ENCODE measurements at regions of chr18 and their contacts with region 1.

Region 1: GRCh38 chr18:46173393-46174341 is 69.5 kb downstream of the HAUS1 start:
- DNase-seq: peak; percentile 96
- ATAC-seq: peak; percentile 90
- H3K4me3 Mint-ChIP-seq: peak overlapping the region; percentile 97
- H3K27ac Mint-ChIP-seq: peak overlapping the region; percentile 99
- H3K4me1 Mint-ChIP-seq: peaks cover 37% of the 10 kb centered on the region
- H3K27me3 Mint-ChIP-seq: no peaks in the 10 kb centered on the region

Region 2: GRCh38 chr18:44458777-44459176 is 1714.9 kb before region 1 on chr18:
- CTCF ChIA-PET with region 1: no interaction called
- POLR2A ChIA-PET with region 1: no interaction called
- intact Hi-C with region 1: no loop called
- DNase-seq: no peak
- ATAC-seq: peak; percentile 81
- H3K4me3 Mint-ChIP-seq: no peak overlapping the region
- H3K27ac Mint-ChIP-seq: no peak overlapping the region
- H3K4me1 Mint-ChIP-seq: no peaks in the 10 kb centered on the region
- H3K27me3 Mint-ChIP-seq: no peaks in the 10 kb centered on the region

Region 3: DNA sequence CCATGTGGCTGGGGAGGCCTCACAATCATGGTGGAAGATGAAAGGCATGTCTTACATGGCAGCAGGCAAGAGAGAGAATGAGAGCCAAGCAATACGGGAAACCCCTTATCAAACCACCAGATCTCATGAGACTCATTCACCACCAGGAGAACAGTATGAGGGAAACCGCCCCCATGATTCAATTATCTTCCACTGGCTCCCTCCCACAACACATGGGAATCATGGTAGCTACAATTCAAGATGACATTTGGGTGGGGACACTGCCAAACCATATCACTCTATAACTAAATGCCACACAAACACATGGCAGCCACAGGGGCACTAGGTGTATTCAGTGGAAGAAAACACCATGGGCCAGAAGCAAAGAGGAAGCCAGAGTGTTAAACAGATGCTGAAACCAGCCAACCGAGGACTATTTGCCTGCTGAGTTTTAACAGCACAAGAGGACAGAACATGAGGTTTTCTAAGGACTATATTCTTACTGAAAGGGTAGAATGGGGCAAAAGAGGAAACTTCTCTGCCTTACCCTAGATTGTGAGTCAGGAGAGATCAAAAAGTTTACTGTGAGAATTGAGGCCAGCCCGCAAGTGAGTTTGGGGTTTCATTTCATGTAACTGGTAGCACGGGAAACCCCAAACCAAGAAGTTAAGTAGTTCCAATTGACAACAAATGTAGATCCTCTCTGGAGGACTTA is 299.0 kb before region 1 on chr18:
- CTCF ChIA-PET with region 1: no interaction called
- POLR2A ChIA-PET with region 1: no interaction called
- intact Hi-C with region 1: no loop called
- DNase-seq: peak; percentile 84
- ATAC-seq: peak; percentile 91
- H3K4me3 Mint-ChIP-seq: peak overlapping the region; percentile 41
- H3K27ac Mint-ChIP-seq: peak overlapping the region; percentile 96
- H3K4me1 Mint-ChIP-seq: peaks cover 34% of the 10 kb centered on the region
- H3K27me3 Mint-ChIP-seq: no peaks in the 10 kb centered on the region

Region 4: DNA sequence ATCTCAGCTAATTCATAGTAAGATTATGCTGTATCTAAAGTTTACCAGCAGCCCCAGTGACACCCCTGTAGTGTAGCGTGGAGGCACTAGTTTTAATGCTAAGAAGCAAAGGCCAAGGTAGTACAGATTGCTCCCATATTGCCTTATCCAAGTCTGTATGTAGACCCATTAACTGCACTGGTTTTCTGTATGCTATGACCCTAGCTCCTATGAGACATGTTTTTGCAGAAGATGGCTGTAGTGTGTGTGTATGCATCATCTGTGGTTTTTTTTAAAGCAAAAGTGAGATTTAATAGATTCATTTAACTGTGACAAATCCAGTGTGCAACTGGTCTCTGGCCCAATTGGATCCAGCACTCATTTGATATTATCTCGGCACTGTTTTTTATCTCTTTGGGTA is 17.0 kb after region 1 on chr18:
- CTCF ChIA-PET with region 1: interaction called, 19 read pairs
- POLR2A ChIA-PET with region 1: interaction called, 9 read pairs
- intact Hi-C with region 1: no loop called
- DNase-seq: no peak
- ATAC-seq: peak; percentile 61
- H3K4me3 Mint-ChIP-seq: no peak overlapping the region
- H3K27ac Mint-ChIP-seq: no peak overlapping the region
- H3K4me1 Mint-ChIP-seq: peaks cover 27% of the 10 kb centered on the region
- H3K27me3 Mint-ChIP-seq: no peaks in the 10 kb centered on the region

Region 5: GRCh38 chr18:46220116-46220515 is 46.4 kb after region 1 on chr18:
- CTCF ChIA-PET with region 1: interaction called, 26 read pairs
- POLR2A ChIA-PET with region 1: interaction called, 3 read pairs
- intact Hi-C with region 1: no loop called
- DNase-seq: no peak
- ATAC-seq: no peak
- H3K4me3 Mint-ChIP-seq: no peak overlapping the region
- H3K27ac Mint-ChIP-seq: no peak overlapping the region
- H3K4me1 Mint-ChIP-seq: peaks cover 79% of the 10 kb centered on the region
- H3K27me3 Mint-ChIP-seq: no peaks in the 10 kb centered on the region

Region 6: GRCh38 chr18:46281185-46282176 is 107.8 kb after region 1 on chr18:
- CTCF ChIA-PET with region 1: interaction called, 14 read pairs
- POLR2A ChIA-PET with region 1: no interaction called
- intact Hi-C with region 1: no loop called
- DNase-seq: peak; percentile 80
- ATAC-seq: peak; percentile 87
- H3K4me3 Mint-ChIP-seq: no peak overlapping the region
- H3K27ac Mint-ChIP-seq: no peak overlapping the region
- H3K4me1 Mint-ChIP-seq: peaks cover 11% of the 10 kb centered on the region
- H3K27me3 Mint-ChIP-seq: no peaks in the 10 kb centered on the region

Region 7: DNA sequence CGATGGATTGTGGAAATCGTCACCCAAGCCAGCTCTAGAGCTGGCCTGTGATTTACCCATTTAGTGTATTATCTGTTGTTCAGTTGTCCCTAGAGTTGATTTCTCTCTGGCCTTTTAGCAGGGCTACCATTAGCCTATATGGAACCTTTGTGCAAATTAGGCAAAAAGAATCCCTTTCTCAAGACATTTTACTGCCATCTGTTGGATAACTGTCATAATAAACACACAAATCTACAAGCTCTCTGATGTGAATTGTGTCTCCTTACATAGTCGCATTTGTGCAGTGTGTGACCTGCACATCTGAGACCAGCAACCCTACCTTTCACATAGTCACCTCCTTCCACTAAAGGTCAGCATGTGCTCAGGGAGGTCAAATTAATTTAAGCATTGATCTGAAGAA is 449.3 kb after region 1 on chr18:
- CTCF ChIA-PET with region 1: no interaction called
- POLR2A ChIA-PET with region 1: no interaction called
- intact Hi-C with region 1: loop called in 1 of 2 experiments (anchors 2 kb)
- DNase-seq: no peak
- ATAC-seq: peak; percentile 44
- H3K4me3 Mint-ChIP-seq: no peak overlapping the region
- H3K27ac Mint-ChIP-seq: peak overlapping the region; percentile 67
- H3K4me1 Mint-ChIP-seq: peaks cover 31% of the 10 kb centered on the region
- H3K27me3 Mint-ChIP-seq: no peaks in the 10 kb centered on the region

Region 8: GRCh38 chr18:47150029-47150823 is 976.6 kb after region 1 on chr18 and contains the start of gene HDHD2:
- CTCF ChIA-PET with region 1: no interaction called
- POLR2A ChIA-PET with region 1: no interaction called
- intact Hi-C with region 1: loop called in 1 of 2 experiments (anchors 5 kb)
- DNase-seq: peak; percentile 88
- ATAC-seq: peak; percentile 89
- H3K4me3 Mint-ChIP-seq: peak within 1 kb of the TSS; percentile 98
- H3K27ac Mint-ChIP-seq: peak within 1 kb of the TSS; percentile 98
- H3K4me1 Mint-ChIP-seq: peaks cover 41% of the 10 kb centered on the region
- H3K27me3 Mint-ChIP-seq: no peaks in the 10 kb centered on the region
- total RNA-seq, gene HDHD2: 27.7 to 28.9 TPM